Activated CD4-positive, alpha-beta memory T cell treated with anti-CD3 and anti-CD28 coated beads for 36 hours (primary cell): ENCODE measurements at regions of chr17 and their contacts with region 1.

Region 1: DNA sequence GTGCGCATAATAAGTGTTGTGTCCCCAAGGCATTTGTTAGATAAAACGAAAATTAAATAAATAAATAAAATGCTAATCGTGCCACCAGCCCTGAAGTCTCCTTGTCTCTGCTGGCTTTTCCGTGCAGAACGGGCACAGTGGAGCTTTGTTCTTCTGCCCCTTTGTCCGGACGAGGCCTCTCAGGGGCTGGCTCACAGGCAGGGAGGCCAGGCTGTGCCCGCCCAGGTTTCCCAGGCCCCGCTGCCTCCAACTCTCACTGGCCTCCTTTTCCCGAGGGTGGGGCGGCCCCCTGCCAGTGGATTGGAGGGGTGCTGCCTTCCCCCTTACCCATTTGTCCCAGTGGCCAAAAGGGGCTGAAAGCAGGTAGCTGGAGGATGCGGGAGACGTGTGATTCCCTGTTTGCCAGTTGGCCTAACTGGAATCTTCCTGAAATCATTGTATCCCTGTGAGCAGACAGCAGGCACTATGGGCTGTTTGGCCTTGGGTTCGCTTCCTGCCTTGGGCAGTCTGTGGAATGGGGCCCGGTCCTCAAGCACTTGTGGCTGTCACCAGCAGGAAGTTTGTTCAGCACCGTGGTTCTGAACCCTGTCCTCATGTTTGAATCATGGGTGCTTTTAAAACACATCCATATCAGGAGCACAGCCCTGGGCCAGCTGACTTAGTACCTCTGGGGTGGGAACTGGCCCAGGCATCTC is 64.4 kb downstream of the KSR1 start:
- DNase-seq: no peak
- H3K4me3 Mint-ChIP-seq: no peak overlapping the region
- H3K27ac Mint-ChIP-seq: no peak overlapping the region
- H3K4me1 Mint-ChIP-seq: peaks cover 46% of the 10 kb centered on the region
- H3K27me3 Mint-ChIP-seq: no peaks in the 10 kb centered on the region

Region 2: GRCh38 chr17:27282054-27282551 is 238.5 kb before region 1 on chr17:
- CTCF ChIA-PET with region 1: no interaction called
- POLR2A ChIA-PET with region 1: no interaction called
- intact Hi-C with region 1: no loop called
- DNase-seq: no peak
- H3K4me3 Mint-ChIP-seq: no peak overlapping the region
- H3K27ac Mint-ChIP-seq: no peak overlapping the region
- H3K4me1 Mint-ChIP-seq: no peaks in the 10 kb centered on the region
- H3K27me3 Mint-ChIP-seq: no peaks in the 10 kb centered on the region

Region 3: GRCh38 chr17:27578718-27579085 is 58.1 kb after region 1 on chr17:
- CTCF ChIA-PET with region 1: no interaction called
- POLR2A ChIA-PET with region 1: no interaction called
- intact Hi-C with region 1: loop called (anchors 5 kb)
- DNase-seq: peak; percentile 90
- H3K4me3 Mint-ChIP-seq: no peak overlapping the region
- H3K27ac Mint-ChIP-seq: peak overlapping the region; percentile 84
- H3K4me1 Mint-ChIP-seq: peaks cover 64% of the 10 kb centered on the region
- H3K27me3 Mint-ChIP-seq: no peaks in the 10 kb centered on the region